B cell (primary cell): ENCODE measurements at regions of chr2 and their contacts with region 1.

Region 1: DNA sequence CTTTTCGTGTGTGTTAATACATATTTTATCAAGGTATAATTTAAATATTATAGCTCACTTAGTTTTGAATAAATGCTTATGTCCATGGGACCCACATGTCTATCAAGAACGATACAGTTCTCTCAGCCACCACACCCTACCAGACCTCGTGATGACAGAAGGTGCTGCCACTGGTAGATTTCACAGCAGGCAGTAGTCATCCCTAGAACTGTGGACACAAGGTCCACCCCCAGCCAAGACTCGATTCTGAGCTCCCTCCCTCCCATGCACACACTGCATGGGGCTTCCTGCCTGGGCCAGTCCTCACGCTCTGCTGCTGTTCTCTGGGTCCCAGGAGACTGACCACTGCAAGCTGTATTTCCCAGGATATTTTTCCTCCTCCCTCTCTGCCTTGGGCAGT is 26.5 kb upstream of the CREB1 start:
- DNase-seq: no peak
- ATAC-seq: peak; percentile 48
- H3K4me3 ChIP-seq: peak overlapping the region in 4 of 5 experiments; percentile 3 to 35 (median 6)
- H3K4me3 Mint-ChIP-seq: peak overlapping the region; percentile 68
- H3K27ac ChIP-seq: peak overlapping the region; percentile 84 to 88
- H3K27ac Mint-ChIP-seq: peak overlapping the region; percentile 90
- H3K4me1 ChIP-seq: peaks cover 76 to 78% of the 10 kb centered on the region in 2 donors
- H3K4me1 Mint-ChIP-seq: peaks cover 79% of the 10 kb centered on the region
- H3K27me3 ChIP-seq: no peaks in the 10 kb centered on the region
- H3K27me3 Mint-ChIP-seq: no peaks in the 10 kb centered on the region
- CTCF ChIP-seq: no peak

Region 2: GRCh38 chr2:207484444-207485391 is 18.5 kb before region 1 on chr2:
- CTCF ChIA-PET with region 1: interaction called, 4 read pairs
- POLR2A ChIA-PET with region 1: interaction called, 3 read pairs
- intact Hi-C with region 1: loop called (anchors 1 kb)
- DNase-seq: peak; percentile 77
- ATAC-seq: peak; percentile 90
- H3K4me3 ChIP-seq: no peak overlapping the region
- H3K4me3 Mint-ChIP-seq: peak overlapping the region; percentile 0
- H3K27ac ChIP-seq: peak overlapping the region; percentile 31 to 63
- H3K27ac Mint-ChIP-seq: peak overlapping the region; percentile 37
- H3K4me1 ChIP-seq: peaks cover 19 to 20% of the 10 kb centered on the region in 2 donors
- H3K4me1 Mint-ChIP-seq: peaks cover 30% of the 10 kb centered on the region
- H3K27me3 ChIP-seq: no peaks in the 10 kb centered on the region
- H3K27me3 Mint-ChIP-seq: no peaks in the 10 kb centered on the region
- CTCF ChIP-seq: no peak